Tibial artery (tissue), 4 donors: ENCODE measurements at regions of chr13 and their contacts with region 1.

Region 1: GRCh38 chr13:29537736-29538651 is 57.5 kb downstream of the SLC7A1 start:
- DNase-seq: no peak
- H3K4me3 ChIP-seq: no peak overlapping the region
- H3K27ac ChIP-seq: no peak overlapping the region
- H3K4me1 ChIP-seq: no peaks in the 10 kb centered on the region
- H3K27me3 ChIP-seq: no peaks in the 10 kb centered on the region
- CTCF ChIP-seq: no peak

Region 2: GRCh38 chr13:28273919-28274318 is 1264.1 kb before region 1 on chr13:
- intact Hi-C with region 1: loop called (anchors 5 kb)
- DNase-seq: no peak
- H3K4me3 ChIP-seq: no peak overlapping the region
- H3K27ac ChIP-seq: no peak overlapping the region
- H3K4me1 ChIP-seq: no peaks in the 10 kb centered on the region
- H3K27me3 ChIP-seq: no peaks in the 10 kb centered on the region
- CTCF ChIP-seq: no peak

Region 3: DNA sequence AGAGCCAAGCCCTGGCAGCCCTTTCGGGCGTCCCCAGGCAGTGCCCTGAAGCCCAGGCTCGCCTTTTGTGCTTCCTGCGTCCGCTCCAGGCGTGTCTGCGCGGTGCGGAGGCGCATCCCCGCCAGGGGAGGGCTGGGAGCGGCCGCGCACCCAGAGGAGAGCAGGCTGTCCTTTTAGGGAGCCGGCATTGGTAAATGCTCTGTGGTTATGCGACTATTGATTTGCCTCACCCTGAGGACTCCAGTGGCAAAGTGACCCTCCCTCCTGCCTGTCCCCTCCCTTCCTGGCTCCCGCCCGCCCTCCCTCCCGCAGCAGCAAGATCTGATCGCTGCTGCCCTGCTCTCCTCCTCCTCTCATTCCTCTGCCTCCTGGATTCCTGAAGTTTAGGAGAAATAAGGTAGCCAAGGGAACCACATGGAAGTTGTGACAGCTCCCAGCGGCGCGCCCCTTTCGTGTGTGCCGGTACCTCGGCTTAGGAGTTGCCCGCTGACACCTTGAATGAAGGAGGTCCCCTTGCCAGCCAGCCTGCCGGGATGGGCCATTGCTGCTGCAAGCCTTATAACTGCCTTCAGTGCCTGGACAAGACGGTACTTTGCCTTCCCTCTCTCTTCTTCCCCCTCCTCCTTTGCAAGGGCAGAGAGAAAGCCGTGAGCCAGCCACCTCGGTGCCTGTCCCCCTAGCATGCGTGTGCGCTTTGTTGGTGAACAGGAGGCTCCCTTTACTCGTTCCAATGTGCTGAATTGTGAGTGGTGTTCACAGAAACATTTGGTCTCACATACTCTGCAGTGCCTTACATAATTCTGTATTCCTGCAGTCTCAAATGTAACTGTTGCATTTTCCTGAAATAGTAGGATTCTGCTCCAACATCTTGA is 109.4 kb before region 1 on chr13:
- intact Hi-C with region 1: no loop called
- DNase-seq: no peak
- H3K4me3 ChIP-seq: peak overlapping the region; percentile 42 to 56
- H3K27ac ChIP-seq: peak overlapping the region in 1 of 2 donors; percentile 24
- H3K4me1 ChIP-seq: peaks cover 0 to 13% (median 13%) of the 10 kb centered on the region in 4 donors
- H3K27me3 ChIP-seq: peaks cover 0 to 9% of the 10 kb centered on the region in 2 donors
- CTCF ChIP-seq: no peak

Region 4: DNA sequence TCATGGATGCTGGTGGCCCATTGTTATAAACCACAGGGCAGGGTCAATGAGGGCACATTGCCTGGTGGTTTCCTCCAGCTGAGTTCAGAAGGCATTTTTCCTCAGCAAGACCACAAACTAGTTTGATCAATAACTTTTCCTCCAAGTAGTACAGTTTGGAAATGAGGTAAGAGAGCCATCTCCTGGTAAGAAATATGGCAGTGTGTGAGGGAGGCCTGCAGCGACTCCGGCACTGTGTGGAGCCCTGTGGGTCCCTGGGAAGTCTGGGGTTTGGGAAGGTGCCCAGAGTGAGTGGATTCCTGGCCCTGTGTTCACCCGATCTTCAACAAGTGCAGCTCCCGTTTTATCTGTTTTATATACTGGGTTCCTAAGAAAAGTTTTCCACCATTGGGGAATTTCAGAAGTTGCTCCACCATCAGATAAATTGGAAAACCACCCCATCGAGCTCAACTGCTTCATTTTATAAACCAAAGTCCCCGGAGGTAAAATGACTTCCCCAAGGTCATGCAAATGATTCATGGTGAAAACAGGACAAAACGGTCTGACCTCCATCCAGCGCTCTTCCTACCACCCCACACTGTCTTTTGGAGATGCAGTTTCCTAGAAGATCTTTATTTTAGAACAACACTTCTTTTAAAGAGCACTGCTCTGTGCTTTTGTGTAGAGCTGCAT is 620.9 kb after region 1 on chr13:
- intact Hi-C with region 1: no loop called
- DNase-seq: no peak
- H3K4me3 ChIP-seq: no peak overlapping the region
- H3K27ac ChIP-seq: no peak overlapping the region
- H3K4me1 ChIP-seq: no peaks in the 10 kb centered on the region
- H3K27me3 ChIP-seq: no peaks in the 10 kb centered on the region
- CTCF ChIP-seq: peak in 1 of 2 experiments; percentile 20